PC-9 (cell line): ENCODE measurements at regions of chr3 and their contacts with region 1.

Region 1: GRCh38 chr3:149273096-149273751 is 51.6 kb upstream of the CP start:
- DNase-seq: peak; percentile 48 to 71
- H3K4me3 ChIP-seq: no peak overlapping the region
- H3K27ac ChIP-seq: no peak overlapping the region
- H3K4me1 ChIP-seq: peaks cover 17% of the 10 kb centered on the region
- H3K27me3 ChIP-seq: no peaks in the 10 kb centered on the region
- CTCF ChIP-seq: peak; percentile 89

Region 2: GRCh38 chr3:148861277-148861869 is 411.9 kb before region 1 on chr3:
- CTCF ChIA-PET with region 1: no interaction called
- POLR2A ChIA-PET with region 1: no interaction called
- intact Hi-C with region 1: loop called (anchors 1 kb)
- DNase-seq: no peak
- H3K4me3 ChIP-seq: no peak overlapping the region
- H3K27ac ChIP-seq: no peak overlapping the region
- H3K4me1 ChIP-seq: no peaks in the 10 kb centered on the region
- H3K27me3 ChIP-seq: no peaks in the 10 kb centered on the region
- CTCF ChIP-seq: peak; percentile 78

Region 3: DNA sequence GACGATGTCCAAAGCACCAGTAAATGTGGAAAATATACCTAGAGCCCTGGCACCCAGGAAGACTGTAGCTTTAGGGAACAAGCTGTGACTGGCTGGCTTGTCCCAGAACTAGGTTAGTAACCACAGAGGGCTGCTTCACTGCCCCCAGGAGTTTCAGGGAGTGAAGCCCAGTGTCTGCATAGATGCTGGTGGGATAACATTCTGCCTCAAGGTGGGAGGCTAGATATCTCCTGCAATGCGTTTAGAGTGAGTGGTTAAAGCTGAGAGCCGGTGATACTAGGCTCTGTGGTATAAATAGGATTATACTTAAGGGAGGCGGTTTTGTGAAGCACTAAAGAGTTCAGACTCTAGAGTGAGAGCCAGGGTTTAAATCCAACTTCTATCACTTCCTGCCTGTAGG is 39.9 kb before region 1 on chr3:
- CTCF ChIA-PET with region 1: no interaction called
- POLR2A ChIA-PET with region 1: no interaction called
- intact Hi-C with region 1: no loop called
- DNase-seq: no peak
- H3K4me3 ChIP-seq: no peak overlapping the region
- H3K27ac ChIP-seq: no peak overlapping the region
- H3K4me1 ChIP-seq: peaks cover 4% of the 10 kb centered on the region
- H3K27me3 ChIP-seq: no peaks in the 10 kb centered on the region
- CTCF ChIP-seq: no peak

Region 4: GRCh38 chr3:149299938-149300791 is 26.9 kb after region 1 on chr3:
- CTCF ChIA-PET with region 1: interaction called, 4 read pairs
- POLR2A ChIA-PET with region 1: no interaction called
- intact Hi-C with region 1: loop called (anchors 1 kb)
- DNase-seq: peak; percentile 76 to 99
- H3K4me3 ChIP-seq: peak overlapping the region; percentile 42; the same call in 1 of the 2 replicates
- H3K27ac ChIP-seq: peak overlapping the region; percentile 100
- H3K4me1 ChIP-seq: peaks cover 55% of the 10 kb centered on the region
- H3K27me3 ChIP-seq: no peaks in the 10 kb centered on the region
- CTCF ChIP-seq: no peak

Region 5: GRCh38 chr3:149339931-149340309 is 66.7 kb after region 1 on chr3:
- CTCF ChIA-PET with region 1: interaction called, 4 read pairs
- POLR2A ChIA-PET with region 1: no interaction called
- intact Hi-C with region 1: loop called (anchors 2 kb)
- DNase-seq: peak; percentile 93 to 98
- H3K4me3 ChIP-seq: peak overlapping the region; percentile 20; the same call in 1 of the 2 replicates
- H3K27ac ChIP-seq: peak overlapping the region; percentile 97
- H3K4me1 ChIP-seq: peaks cover 41% of the 10 kb centered on the region
- H3K27me3 ChIP-seq: no peaks in the 10 kb centered on the region
- CTCF ChIP-seq: no peak

Region 6: GRCh38 chr3:149366941-149367840 is 94.0 kb after region 1 on chr3:
- CTCF ChIA-PET with region 1: no interaction called
- POLR2A ChIA-PET with region 1: no interaction called
- intact Hi-C with region 1: no loop called
- DNase-seq: peak; percentile 86 to 99
- H3K4me3 ChIP-seq: 0 out of 2 replicates have a peak overlapping the region, but pooled peaks have one; percentile 6
- H3K27ac ChIP-seq: peak overlapping the region; percentile 99
- H3K4me1 ChIP-seq: peaks cover 63% of the 10 kb centered on the region
- H3K27me3 ChIP-seq: no peaks in the 10 kb centered on the region
- CTCF ChIP-seq: no peak

Region 7: DNA sequence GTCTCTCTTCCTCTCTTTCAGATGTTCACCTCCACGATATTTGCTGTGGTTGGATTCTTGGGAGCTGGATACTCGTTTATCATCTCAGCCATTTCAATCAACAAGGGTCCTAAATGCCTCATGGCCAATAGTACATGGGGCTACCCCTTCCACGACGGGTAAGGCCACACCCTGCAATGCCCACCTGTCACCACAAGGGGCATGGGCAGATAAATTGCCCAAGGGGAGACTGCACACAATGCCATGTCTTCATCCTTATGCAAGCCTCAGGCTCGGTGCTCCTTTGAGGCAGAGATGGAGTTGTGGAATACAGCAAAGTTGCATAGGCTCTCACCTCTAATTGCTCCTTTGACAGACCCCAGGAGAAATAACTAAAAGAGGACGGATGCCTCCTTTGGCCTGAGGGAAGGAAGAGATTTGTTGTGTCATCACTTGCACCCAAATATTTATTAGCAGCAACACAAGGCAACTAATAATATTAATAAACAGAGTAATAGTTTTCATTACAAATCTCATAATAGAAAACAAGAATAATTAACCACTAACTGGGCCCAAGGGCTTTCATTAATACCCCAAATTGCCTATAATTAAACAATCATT is 214.5 kb after region 1 on chr3:
- CTCF ChIA-PET with region 1: no interaction called
- POLR2A ChIA-PET with region 1: no interaction called
- intact Hi-C with region 1: loop called (anchors 2 kb)
- DNase-seq: no peak
- H3K4me3 ChIP-seq: no peak overlapping the region
- H3K27ac ChIP-seq: no peak overlapping the region
- H3K4me1 ChIP-seq: no peaks in the 10 kb centered on the region
- H3K27me3 ChIP-seq: no peaks in the 10 kb centered on the region
- CTCF ChIP-seq: no peak; the same call in none of the 2 replicates